Right ventricle myocardium inferior (tissue), 1 donor: ENCODE measurements at regions of chr14 and their contacts with region 1.

Region 1: DNA sequence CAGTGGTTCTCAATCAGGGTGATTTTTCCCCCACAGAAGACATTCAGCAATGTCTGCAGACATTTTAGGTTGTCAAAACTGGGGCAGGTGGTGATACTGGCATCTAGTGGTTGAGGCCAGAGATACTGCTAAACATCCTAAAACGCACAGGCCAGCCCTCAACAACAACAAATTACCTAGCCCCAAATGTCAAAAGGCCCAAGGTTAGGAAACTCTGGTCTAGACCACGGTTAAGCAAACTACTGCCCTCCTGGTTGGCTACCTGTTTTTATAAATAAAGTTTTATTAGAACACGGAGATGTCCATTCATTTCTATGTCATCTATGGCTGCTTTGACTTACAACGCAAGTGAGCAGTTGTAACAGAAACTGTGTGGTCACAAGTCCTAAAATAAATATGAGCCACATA is 186.7 kb downstream of the EFCAB11 start:
- DNase-seq: no peak
- ATAC-seq: peak; percentile 26

Region 2: DNA sequence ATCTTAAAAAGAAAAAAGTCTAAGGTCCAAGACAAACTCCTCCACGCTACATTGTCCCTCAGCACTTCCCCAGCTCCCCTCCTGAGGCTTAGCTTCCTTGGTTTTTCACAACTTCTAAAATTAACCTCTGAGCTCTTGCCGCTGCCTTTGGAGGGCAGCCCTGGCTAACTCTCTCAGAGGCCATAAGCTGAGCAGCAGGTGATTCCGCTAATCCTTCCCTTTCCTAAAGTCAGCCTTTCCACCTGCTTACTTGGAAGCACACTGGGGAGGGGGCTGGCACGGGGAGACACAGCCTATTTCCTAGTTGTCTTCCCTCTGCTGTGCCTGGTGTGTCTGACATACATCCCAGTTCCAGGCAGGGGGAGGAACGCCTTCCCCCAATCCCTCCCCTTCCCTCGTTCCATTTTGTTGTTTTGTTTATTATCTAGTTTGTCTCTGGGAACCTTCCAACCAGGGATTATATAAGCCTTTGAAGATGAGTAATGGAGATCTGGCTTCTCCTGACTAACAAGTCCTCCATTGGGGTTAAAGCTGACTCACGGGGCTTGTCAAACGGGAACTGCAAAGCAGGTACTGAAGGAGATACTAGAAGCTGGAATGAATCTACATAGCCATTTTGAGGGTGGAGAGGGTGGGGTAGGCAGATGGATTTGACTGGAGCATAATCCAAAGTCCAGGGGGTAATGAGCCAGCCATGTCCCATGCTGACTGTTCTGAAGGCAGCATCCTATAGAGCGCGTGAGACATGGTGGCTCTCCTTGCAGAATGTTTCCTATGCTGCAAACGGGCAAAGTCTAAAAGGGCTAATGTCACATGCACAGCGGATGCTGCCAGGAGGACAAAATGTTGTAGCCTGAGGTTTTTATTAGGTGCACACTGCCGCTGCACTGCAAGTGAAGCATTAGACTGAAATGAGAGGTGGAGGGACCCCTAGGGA is 581.7 kb before region 1 on chr14:
- intact Hi-C with region 1: loop called (anchors 10 kb)
- DNase-seq: no peak
- ATAC-seq: peak; percentile 43

Region 3: GRCh38 chr14:89425931-89426330 is 341.9 kb before region 1 on chr14:
- intact Hi-C with region 1: loop called (anchors 10 kb)
- DNase-seq: no peak
- ATAC-seq: no peak

Region 4: GRCh38 chr14:89640141-89640540 is 127.7 kb before region 1 on chr14:
- intact Hi-C with region 1: no loop called
- DNase-seq: no peak
- ATAC-seq: no peak